Heart left ventricle (tissue), 16 donors: ENCODE measurements at regions of chr10 and their contacts with region 1.

Region 1: GRCh38 chr10:28302638-28303488 is at the start of gene MPP7:
- DNase-seq: peak; percentile 95 to 97 (median 96)
- ATAC-seq: peak; percentile 99
- H3K4me3 ChIP-seq: peak within 1 kb of the TSS; percentile 70 to 98 (median 88)
- H3K27ac ChIP-seq: peak within 1 kb of the TSS; percentile 48 to 93 (median 86)
- H3K4me1 ChIP-seq: peaks cover 0 to 23% (median 8%) of the 10 kb centered on the region in 12 donors
- H3K27me3 ChIP-seq: no peaks in the 10 kb centered on the region
- CTCF ChIP-seq: peak in 10 of 12 donors; percentile 11 to 52 (median 40)
- POLR2A ChIP-seq: peak in 1 of 2 donors; percentile 44
- total RNA-seq, gene MPP7: 8.9 to 18.6 (median 15.5) TPM

Region 2: GRCh38 chr10:28250782-28251181 is 52.1 kb before region 1 on chr10:
- intact Hi-C with region 1: loop called in 2 of 10 experiments (anchors 5 kb)
- DNase-seq: no peak
- ATAC-seq: peak in 2 of 4 donors; percentile 40 to 42
- H3K4me3 ChIP-seq: no peak overlapping the region
- H3K27ac ChIP-seq: no peak overlapping the region
- H3K4me1 ChIP-seq: peaks cover 0 to 25% (median 1%) of the 10 kb centered on the region in 12 donors
- H3K27me3 ChIP-seq: peaks cover 0 to 4% (median 0%) of the 10 kb centered on the region in 9 donors
- CTCF ChIP-seq: peak; percentile 32 to 69 (median 59)
- POLR2A ChIP-seq: no peak

Region 3: DNA sequence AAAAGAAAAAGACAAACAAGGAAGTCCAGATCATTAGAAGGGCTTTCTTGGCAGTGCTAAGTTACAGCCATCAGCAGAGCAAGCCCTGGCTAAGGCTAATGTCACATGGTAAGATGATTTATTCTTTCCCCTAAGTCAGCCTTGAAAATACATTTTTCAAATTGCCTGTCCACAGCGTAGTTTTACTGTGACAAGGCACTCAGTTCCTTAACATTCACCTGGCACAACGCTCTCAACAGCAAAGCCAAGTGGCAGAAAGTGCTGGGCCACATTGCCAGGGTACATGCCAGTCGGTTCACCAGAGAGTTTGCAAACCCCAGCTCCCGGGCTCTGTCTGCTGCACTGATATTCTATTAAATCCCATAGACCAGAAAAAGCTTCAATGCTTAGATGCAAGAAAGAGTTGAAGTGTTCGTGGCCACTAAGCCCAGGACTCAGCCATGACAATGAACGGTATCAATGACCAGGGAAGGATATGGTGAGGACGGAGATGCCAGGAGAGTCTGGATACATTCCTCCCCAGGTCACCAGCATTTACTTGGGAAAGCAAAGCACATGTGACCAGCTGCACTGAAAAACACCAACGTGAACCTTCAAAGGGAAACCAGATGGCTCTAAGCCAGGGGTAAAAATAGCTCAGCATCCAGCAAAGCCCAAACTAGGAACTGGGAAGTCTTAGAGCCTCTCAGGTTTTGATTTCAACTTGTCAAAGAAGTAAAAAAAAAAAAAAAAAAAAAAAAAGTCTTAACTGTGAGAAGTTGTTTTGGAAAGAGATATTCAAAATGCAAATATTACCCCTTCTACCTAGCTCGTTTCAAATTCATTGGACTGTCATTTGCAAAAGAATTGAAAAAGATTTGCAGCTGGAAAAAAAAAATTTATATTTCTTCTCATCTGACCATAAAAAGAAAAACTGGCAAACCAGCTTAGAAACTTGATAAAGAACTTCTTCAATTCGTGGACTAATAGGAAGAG is 23.9 kb after region 1 on chr10:
- intact Hi-C with region 1: loop called in 3 of 10 experiments (anchors 1 to 2 kb)
- DNase-seq: peak in 4 of 5 donors; percentile 57 to 74 (median 63)
- ATAC-seq: peak; percentile 84 to 93 (median 90)
- H3K4me3 ChIP-seq: peak overlapping the region in 8 of 12 donors; percentile 3 to 33 (median 15)
- H3K27ac ChIP-seq: peak overlapping the region; percentile 48 to 93 (median 84)
- H3K4me1 ChIP-seq: peaks cover 0 to 31% (median 19%) of the 10 kb centered on the region in 12 donors
- H3K27me3 ChIP-seq: no peaks in the 10 kb centered on the region
- CTCF ChIP-seq: no peak
- POLR2A ChIP-seq: no peak

Region 4: GRCh38 chr10:28375399-28376369 is 72.8 kb after region 1 on chr10:
- intact Hi-C with region 1: loop called in 6 of 10 experiments (anchors 5 to 10 kb)
- DNase-seq: no peak
- ATAC-seq: peak in 1 of 4 donors; percentile 54
- H3K4me3 ChIP-seq: no peak overlapping the region
- H3K27ac ChIP-seq: no peak overlapping the region
- H3K4me1 ChIP-seq: no peaks in the 10 kb centered on the region
- H3K27me3 ChIP-seq: no peaks in the 10 kb centered on the region
- CTCF ChIP-seq: no peak
- POLR2A ChIP-seq: no peak